ENCODE measurements at regions of chr2 and their contacts with region 1.

Region 1: GRCh38 chr2:223944703-223945531 is at the start of gene WDFY1:
- DNase-seq: peak; percentile 87
- ATAC-seq: peak; percentile 93
- H3K4me3 ChIP-seq: peak within 1 kb of the TSS; percentile 58 to 92 (median 89)
- H3K4me3 Mint-ChIP-seq: peak within 1 kb of the TSS; percentile 94
- H3K27ac ChIP-seq: peak within 1 kb of the TSS; percentile 35 to 87
- H3K27ac Mint-ChIP-seq: peak within 1 kb of the TSS; percentile 94
- H3K4me1 ChIP-seq: peaks cover 21 to 44% of the 10 kb centered on the region in 2 donors
- H3K4me1 Mint-ChIP-seq: peaks cover 50% of the 10 kb centered on the region
- H3K27me3 ChIP-seq: no peaks in the 10 kb centered on the region
- H3K27me3 Mint-ChIP-seq: no peaks in the 10 kb centered on the region
- CTCF ChIP-seq: no peak
- total RNA-seq, gene WDFY1: 71.2 and 76.0 TPM in 2 replicates

Region 2: DNA sequence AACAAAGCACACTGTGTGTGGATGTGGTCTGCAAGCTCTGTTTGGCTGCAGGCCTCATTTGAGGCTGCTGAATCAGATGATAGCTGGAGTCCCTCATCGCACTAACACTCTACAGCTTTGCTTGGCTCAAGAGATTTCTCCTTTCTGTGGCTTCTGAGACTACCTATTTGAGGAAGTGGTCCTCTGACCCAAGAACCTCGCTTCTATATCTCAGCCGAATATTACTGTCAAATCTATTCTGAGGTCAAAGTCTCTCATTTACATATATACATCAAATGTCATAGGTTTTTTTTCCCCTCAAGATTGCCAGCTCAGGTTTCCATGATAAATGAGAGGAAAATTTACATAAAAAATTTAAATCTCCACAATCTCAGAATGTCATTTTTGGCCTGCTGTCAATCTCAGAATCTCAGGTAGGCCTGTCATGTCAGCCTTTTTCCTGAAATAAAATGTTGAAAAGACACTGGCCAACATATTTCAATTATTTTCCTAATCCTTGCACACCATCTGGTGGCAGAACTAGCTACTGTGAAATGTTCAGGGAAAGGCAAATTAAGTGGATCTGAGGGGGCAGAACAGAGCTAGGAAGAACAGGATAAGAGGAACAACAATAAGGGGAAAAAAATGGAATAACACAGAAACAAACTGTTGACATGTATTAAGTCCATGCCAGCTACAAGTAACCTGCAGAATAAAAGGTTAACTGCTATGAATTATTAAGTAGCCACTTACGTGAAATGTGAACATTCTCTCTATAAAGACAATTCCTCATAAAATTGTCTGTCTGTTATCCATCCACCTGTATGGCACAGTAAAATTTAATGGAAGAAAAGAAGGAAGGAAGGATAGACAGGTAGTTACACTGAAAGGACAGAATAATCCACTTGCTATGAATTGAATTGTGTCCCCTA is 146.9 kb before region 1 on chr2:
- CTCF ChIA-PET with region 1: no interaction called
- POLR2A ChIA-PET with region 1: no interaction called
- intact Hi-C with region 1: no loop called
- DNase-seq: peak; percentile 57
- ATAC-seq: peak; percentile 74
- H3K4me3 ChIP-seq: no peak overlapping the region
- H3K4me3 Mint-ChIP-seq: peak overlapping the region; percentile 0
- H3K27ac ChIP-seq: peak overlapping the region in 1 of 2 donors; percentile 7
- H3K27ac Mint-ChIP-seq: peak overlapping the region; percentile 56
- H3K4me1 ChIP-seq: peaks cover 14 to 21% of the 10 kb centered on the region in 2 donors
- H3K4me1 Mint-ChIP-seq: peaks cover 49% of the 10 kb centered on the region
- H3K27me3 ChIP-seq: no peaks in the 10 kb centered on the region
- H3K27me3 Mint-ChIP-seq: no peaks in the 10 kb centered on the region
- CTCF ChIP-seq: no peak

Region 3: DNA sequence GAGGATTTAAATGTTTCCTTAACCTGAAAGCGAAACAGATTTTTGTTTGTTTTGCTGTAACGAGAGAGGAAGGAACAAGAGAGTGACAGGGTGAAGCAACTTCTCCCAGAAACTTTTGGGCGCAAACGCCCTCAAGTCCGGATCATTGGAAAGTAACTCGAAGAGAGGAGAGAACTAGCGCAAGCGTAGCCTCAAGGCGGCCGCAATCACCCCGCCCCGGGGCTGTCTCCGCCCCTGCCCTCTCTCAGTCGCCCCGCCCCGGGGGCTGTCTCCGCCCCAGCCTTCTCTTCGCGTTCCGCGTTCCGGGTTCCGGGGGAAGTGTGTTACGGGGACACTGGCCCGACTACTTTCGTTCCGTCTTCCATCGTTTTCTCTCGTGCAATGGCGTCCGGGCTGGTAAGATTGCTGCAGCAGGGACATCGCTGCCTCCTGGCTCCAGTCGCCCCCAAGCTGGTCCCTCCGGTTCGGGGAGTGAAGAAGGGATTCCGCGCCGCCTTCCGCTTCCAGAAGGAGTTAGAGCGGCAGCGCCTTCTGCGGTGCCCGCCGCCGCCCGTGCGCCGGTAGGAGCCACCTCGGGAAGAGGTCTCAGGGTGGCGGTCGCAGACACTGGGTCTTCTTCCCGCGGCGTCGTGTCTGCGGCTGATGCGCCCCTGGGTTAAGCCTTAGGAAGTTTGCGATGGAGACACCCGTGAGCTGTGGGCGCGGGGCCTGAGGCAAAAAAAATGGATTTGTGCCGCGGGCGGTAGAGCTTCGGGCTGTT is 12.4 kb after region 1 on chr2 and contains the start of gene MRPL44:
- CTCF ChIA-PET with region 1: interaction called, 5 read pairs
- POLR2A ChIA-PET with region 1: interaction called, 6 read pairs
- intact Hi-C with region 1: loop called (anchors 1 kb)
- DNase-seq: peak; percentile 96
- ATAC-seq: peak; percentile 99
- H3K4me3 ChIP-seq: peak within 1 kb of the TSS; percentile 66 to 94 (median 86)
- H3K4me3 Mint-ChIP-seq: peak within 1 kb of the TSS; percentile 94
- H3K27ac ChIP-seq: peak within 1 kb of the TSS; percentile 72 to 78
- H3K27ac Mint-ChIP-seq: peak within 1 kb of the TSS; percentile 97
- H3K4me1 ChIP-seq: peaks cover 48 to 52% of the 10 kb centered on the region in 2 donors
- H3K4me1 Mint-ChIP-seq: peaks cover 67% of the 10 kb centered on the region
- H3K27me3 ChIP-seq: no peaks in the 10 kb centered on the region
- H3K27me3 Mint-ChIP-seq: no peaks in the 10 kb centered on the region
- CTCF ChIP-seq: no peak
- total RNA-seq, gene MRPL44: 23.4 and 26.7 TPM in 2 replicates

Region 4: GRCh38 chr2:224946895-224947294 is 1002.0 kb after region 1 on chr2:
- CTCF ChIA-PET with region 1: no interaction called
- POLR2A ChIA-PET with region 1: no interaction called
- intact Hi-C with region 1: loop called (anchors 10 kb)
- DNase-seq: peak; percentile 70
- ATAC-seq: peak; percentile 71
- H3K4me3 ChIP-seq: peak overlapping the region; percentile 44 to 92 (median 71)
- H3K4me3 Mint-ChIP-seq: peak overlapping the region; percentile 88
- H3K27ac ChIP-seq: peak overlapping the region; percentile 75 to 91
- H3K27ac Mint-ChIP-seq: peak overlapping the region; percentile 95
- H3K4me1 ChIP-seq: peaks cover 66 to 76% of the 10 kb centered on the region in 2 donors
- H3K4me1 Mint-ChIP-seq: peaks cover 82% of the 10 kb centered on the region
- H3K27me3 ChIP-seq: no peaks in the 10 kb centered on the region
- H3K27me3 Mint-ChIP-seq: no peaks in the 10 kb centered on the region
- CTCF ChIP-seq: no peak

Measured in B cell (primary cell).